Heart right ventricle (tissue), 16 donors: ENCODE measurements at regions of chrX and their contacts with region 1.

Region 1: DNA sequence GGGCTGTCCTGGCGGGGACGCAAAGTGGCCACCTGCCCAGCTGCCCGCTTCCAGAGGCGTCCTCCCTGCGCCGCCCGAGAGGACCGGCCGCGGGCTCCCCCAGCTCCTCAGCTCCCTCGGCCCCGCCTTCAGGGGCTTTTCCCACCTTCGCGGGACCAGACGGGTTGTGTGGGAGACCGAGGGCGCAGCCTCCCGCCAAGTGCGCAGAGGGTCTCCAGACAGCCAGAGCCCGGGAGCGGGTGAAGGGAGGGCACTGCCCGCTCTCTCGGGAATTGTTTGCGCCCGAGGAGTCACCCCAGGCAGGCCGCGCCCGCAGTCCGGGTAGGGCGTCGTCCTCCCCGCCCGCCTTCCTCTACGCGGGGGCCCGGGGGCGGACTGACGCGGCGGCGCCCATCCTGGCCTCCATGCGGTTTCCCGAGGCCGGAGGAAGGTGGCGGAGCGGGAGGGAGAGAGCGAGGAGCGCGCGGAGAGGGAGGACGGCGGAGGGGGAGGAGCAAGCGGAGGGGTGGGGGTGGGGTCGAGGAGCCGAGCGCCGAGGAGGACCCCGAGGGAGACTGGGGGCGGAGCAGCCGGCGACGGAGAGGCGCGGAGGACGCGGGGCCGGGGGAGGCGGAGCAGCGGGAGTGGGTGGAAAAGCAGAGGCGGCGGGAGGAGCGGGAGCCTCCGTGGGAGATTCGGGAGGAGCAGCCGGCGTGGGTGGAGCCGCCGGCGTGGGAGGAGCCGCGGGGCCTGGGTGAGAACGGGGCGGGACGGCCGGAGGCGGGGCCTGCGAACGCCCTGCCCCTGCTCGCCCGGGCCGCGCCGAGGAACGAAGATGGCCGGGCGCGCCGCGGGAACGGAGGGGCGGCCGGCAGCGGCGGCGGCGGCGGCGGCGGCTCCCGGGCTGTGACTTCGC is 47.6 kb downstream of the CLDN34 start:
- DNase-seq: peak; percentile 87 to 93
- ATAC-seq: peak; percentile 88 to 96 (median 92)
- H3K4me3 ChIP-seq: peak overlapping the region; percentile 47 to 65 (median 60)
- H3K27ac ChIP-seq: peak overlapping the region; percentile 84 to 95 (median 92)
- H3K4me1 ChIP-seq: peaks cover 2 to 57% (median 33%) of the 10 kb centered on the region in 9 donors
- H3K27me3 ChIP-seq: peaks cover 0 to 63% (median 0%) of the 10 kb centered on the region in 7 donors
- CTCF ChIP-seq: no peak

Region 2: GRCh38 chrX:10045327-10046000 is 30.8 kb after region 1 on chrX:
- intact Hi-C with region 1: loop called in 4 of 10 experiments (anchors 5 kb)
- DNase-seq: peak; percentile 40 to 45
- ATAC-seq: peak; percentile 57 to 84 (median 78)
- H3K4me3 ChIP-seq: no peak overlapping the region
- H3K27ac ChIP-seq: peak overlapping the region; percentile 8 to 77 (median 74)
- H3K4me1 ChIP-seq: peaks cover 0 to 83% (median 50%) of the 10 kb centered on the region in 9 donors
- H3K27me3 ChIP-seq: peaks cover 0 to 3% (median 0%) of the 10 kb centered on the region in 7 donors
- CTCF ChIP-seq: no peak

Region 3: DNA sequence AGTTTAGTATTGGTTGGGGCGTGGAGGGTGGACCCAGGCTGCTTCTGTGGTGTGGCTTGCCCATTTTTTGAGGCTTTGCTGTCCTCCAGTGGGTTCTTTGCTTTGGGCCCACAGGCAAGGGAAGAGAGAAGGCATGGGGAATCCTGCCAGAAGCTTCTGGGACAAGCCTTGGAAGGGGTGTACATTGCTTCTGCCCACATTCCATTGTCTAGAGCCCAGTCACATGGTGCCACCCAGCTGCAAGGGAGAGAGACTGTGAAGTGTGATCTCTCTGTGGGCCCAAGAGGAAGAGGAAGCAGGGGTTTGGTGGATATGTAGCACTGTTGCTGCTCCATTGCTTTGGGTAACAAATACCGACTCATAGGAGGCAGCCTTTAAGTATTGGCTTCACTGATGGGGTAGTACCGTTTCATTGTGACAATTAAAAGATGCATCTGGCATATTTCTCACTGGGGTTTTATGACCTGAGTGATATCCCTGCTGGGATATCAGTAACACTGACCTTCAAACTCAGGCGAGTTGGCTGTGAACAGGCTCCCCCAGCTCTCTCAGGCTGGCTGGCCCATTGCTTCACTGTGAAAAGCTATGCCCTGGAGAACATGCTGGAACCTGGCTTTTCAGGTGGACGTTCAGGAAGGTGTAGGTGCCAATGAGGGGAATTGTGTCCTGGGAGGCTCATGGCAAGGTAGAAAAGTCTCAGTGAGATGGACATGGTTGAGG is 38.4 kb after region 1 on chrX:
- intact Hi-C with region 1: loop called in 4 of 10 experiments (anchors 5 kb)
- DNase-seq: peak in 1 of 2 donors; percentile 43
- ATAC-seq: peak; percentile 54 to 90 (median 75)
- H3K4me3 ChIP-seq: no peak overlapping the region
- H3K27ac ChIP-seq: peak overlapping the region in 8 of 10 donors; percentile 52 to 73 (median 63)
- H3K4me1 ChIP-seq: peaks cover 0 to 65% (median 53%) of the 10 kb centered on the region in 9 donors
- H3K27me3 ChIP-seq: peaks cover 0 to 3% (median 0%) of the 10 kb centered on the region in 7 donors
- CTCF ChIP-seq: peak in 1 of 9 donors; percentile 9

Region 4: GRCh38 chrX:10083809-10084208 is 69.1 kb after region 1 on chrX:
- intact Hi-C with region 1: loop called in 1 of 10 experiments (anchors 5 kb)
- DNase-seq: no peak
- ATAC-seq: peak in 5 of 8 donors; percentile 17 to 54 (median 24)
- H3K4me3 ChIP-seq: peak overlapping the region in 2 of 10 donors; percentile 7 to 29
- H3K27ac ChIP-seq: peak overlapping the region; percentile 54 to 84 (median 74)
- H3K4me1 ChIP-seq: peaks cover 3 to 63% (median 42%) of the 10 kb centered on the region in 9 donors
- H3K27me3 ChIP-seq: peaks cover 0 to 9% (median 0%) of the 10 kb centered on the region in 7 donors
- CTCF ChIP-seq: no peak